ENCODE measurements at regions of chr3 and their contacts with region 1.

Region 1: GRCh38 chr3:9731206-9732079 is at the start of gene BRPF1:
- DNase-seq: peak; percentile 99
- ATAC-seq: peak; percentile 94
- H3K4me3 Mint-ChIP-seq: peak within 1 kb of the TSS; percentile 91
- H3K27ac Mint-ChIP-seq: peak within 1 kb of the TSS; percentile 96
- H3K4me1 Mint-ChIP-seq: peaks cover 18% of the 10 kb centered on the region
- H3K27me3 Mint-ChIP-seq: no peaks in the 10 kb centered on the region
- CTCF ChIP-seq: no peak
- total RNA-seq, gene BRPF1: 20.4 to 22.8 TPM (median 21.4 TPM) in 3 replicates

Region 2: GRCh38 chr3:9352917-9353752 is 378.3 kb before region 1 on chr3:
- CTCF ChIA-PET with region 1: interaction called, 12 read pairs
- POLR2A ChIA-PET with region 1: no interaction called
- DNase-seq: peak; percentile 72
- ATAC-seq: peak; percentile 74
- H3K4me3 Mint-ChIP-seq: peak overlapping the region; percentile 45; the same call in 1 of the 2 replicates
- H3K27ac Mint-ChIP-seq: peak overlapping the region; percentile 97
- H3K4me1 Mint-ChIP-seq: peaks cover 46% of the 10 kb centered on the region
- H3K27me3 Mint-ChIP-seq: no peaks in the 10 kb centered on the region
- CTCF ChIP-seq: peak; percentile 68

Region 3: DNA sequence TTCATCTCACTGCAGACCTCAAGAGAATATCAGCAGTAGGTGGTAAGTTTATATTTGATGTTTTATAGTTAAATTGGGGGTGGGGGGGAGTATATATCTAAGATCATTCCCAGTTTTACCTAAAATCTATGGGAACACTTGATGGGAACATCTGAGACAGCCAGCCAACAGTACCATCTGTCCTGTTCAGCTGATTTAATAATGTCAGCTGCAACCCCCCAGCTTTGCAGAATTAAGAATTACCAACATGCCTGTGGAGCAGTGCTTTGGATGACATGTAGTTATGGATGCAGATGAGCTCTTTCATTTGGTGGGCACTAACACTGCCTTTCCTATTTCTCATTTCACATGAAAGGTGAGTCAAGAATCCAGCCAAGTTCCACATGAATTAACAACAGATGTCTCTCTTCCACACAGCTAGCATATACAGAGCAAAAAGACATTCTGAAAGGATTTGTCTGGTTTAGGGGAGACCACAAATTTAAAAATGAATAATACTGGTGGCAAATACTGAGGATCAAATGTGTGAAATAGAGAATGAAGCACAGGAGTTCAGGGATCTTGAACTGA is 257.9 kb before region 1 on chr3:
- CTCF ChIA-PET with region 1: no interaction called
- POLR2A ChIA-PET with region 1: no interaction called
- DNase-seq: no peak
- ATAC-seq: no peak
- H3K4me3 Mint-ChIP-seq: no peak overlapping the region
- H3K27ac Mint-ChIP-seq: no peak overlapping the region
- H3K4me1 Mint-ChIP-seq: no peaks in the 10 kb centered on the region
- H3K27me3 Mint-ChIP-seq: no peaks in the 10 kb centered on the region
- CTCF ChIP-seq: no peak

Region 4: GRCh38 chr3:9552252-9552999 is 179.0 kb before region 1 on chr3:
- CTCF ChIA-PET with region 1: interaction called, 15 read pairs
- POLR2A ChIA-PET with region 1: no interaction called
- DNase-seq: peak; percentile 92
- ATAC-seq: peak; percentile 72
- H3K4me3 Mint-ChIP-seq: peak overlapping the region; percentile 95
- H3K27ac Mint-ChIP-seq: no peak overlapping the region
- H3K4me1 Mint-ChIP-seq: peaks cover 26% of the 10 kb centered on the region
- H3K27me3 Mint-ChIP-seq: peaks cover 31% of the 10 kb centered on the region
- CTCF ChIP-seq: no peak

Region 5: DNA sequence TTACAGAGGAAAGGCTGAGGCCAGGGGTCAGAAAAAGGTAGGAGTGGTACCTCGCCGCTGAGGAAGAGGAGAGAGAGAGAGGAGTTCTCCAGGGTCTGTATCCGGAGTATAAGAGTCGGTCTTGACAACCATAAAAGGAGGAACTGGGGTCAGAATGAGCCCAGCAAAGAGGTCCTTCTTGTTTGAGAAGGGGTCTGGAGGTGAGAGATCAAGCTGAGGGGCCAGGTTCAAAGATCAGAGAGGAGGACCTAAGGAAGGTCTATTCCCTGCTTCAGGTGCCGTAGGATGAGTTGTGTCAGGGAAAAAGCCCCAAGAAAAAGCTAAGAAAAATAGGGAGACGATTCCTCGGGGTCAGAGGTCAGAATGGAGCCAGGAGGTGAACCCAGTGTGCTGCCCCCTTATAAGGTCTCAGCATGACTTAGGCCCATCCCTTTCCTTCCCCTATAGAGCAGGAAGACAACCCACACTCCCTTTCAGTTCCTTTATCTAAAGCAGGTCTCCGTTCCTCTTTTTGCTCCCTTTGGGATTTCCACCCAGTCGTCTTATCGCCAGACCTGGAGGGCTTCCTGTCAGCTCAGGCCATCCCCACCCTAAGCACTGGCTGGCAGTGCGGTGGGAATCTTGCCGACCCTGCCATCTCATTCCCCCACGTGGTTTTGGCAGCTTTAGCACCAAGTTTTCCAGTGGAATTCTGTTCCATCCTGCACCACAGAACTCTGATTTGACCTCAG is 81.5 kb before region 1 on chr3:
- CTCF ChIA-PET with region 1: interaction called, 15 read pairs
- POLR2A ChIA-PET with region 1: no interaction called
- DNase-seq: no peak
- ATAC-seq: no peak
- H3K4me3 Mint-ChIP-seq: peak overlapping the region; percentile 97
- H3K27ac Mint-ChIP-seq: peak overlapping the region; percentile 80
- H3K4me1 Mint-ChIP-seq: peaks cover 14% of the 10 kb centered on the region
- H3K27me3 Mint-ChIP-seq: no peaks in the 10 kb centered on the region
- CTCF ChIP-seq: no peak

Region 6: DNA sequence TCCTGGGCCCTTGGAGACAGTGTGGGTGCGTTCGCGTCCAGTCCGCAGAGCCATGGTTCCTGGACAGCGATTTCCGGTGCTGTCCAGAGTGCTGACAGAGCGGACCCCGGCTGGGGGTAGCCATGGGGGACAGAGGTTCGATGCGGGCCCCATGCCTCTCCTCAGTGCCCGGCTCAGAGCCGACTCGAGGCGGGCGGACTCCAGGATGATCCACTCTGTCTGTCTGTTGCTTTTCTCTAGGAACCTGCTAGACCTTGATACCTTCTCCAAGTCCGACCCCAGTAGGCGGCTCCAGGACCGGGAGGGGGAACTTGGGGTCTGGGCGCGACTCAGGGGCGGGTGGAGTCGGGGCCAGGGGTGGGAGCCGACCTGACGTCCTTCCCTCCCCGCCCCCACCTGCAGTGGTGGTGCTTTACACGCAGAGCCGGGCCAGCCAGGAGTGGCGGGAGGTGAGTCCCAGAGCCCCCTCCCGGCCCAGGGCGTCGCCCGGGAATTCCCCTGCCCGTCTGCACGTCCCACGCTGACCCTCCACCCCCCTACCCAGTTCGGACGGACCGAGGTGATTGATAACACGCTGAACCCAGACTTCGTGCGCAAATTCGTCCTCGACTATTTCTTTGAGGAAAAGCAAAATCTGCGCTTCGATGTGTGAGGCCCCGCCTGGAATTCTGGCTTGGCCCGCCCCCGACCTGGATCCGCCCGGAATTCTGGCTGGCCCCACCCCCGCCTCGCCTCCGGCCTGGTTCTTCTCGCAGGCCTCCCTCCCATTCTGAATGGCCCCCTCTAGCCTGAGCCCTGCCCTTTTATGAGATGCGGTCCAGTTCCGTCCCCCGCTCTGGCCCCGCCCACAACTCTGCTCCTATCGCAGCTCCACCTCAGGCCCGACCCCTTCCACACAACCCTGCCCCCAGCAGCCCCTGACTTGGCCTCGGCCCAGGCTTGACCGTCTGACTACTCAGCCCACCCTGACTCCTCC is 26.8 kb before region 1 on chr3:
- CTCF ChIA-PET with region 1: interaction called, 72 read pairs
- POLR2A ChIA-PET with region 1: no interaction called
- DNase-seq: peak; percentile 97
- ATAC-seq: peak; percentile 96
- H3K4me3 Mint-ChIP-seq: peak overlapping the region; percentile 73
- H3K27ac Mint-ChIP-seq: no peak overlapping the region
- H3K4me1 Mint-ChIP-seq: no peaks in the 10 kb centered on the region
- H3K27me3 Mint-ChIP-seq: peaks cover 37% of the 10 kb centered on the region
- CTCF ChIP-seq: no peak

Region 7: GRCh38 chr3:9749645-9750555 is 18.5 kb after region 1 on chr3 and contains the start of gene OGG1:
- CTCF ChIA-PET with region 1: interaction called, 21 read pairs
- POLR2A ChIA-PET with region 1: interaction called, 14 read pairs
- DNase-seq: peak; percentile 96
- ATAC-seq: peak; percentile 96
- H3K4me3 Mint-ChIP-seq: peak within 1 kb of the TSS; percentile 98
- H3K27ac Mint-ChIP-seq: peak within 1 kb of the TSS; percentile 99
- H3K4me1 Mint-ChIP-seq: peaks cover 11% of the 10 kb centered on the region
- H3K27me3 Mint-ChIP-seq: no peaks in the 10 kb centered on the region
- CTCF ChIP-seq: no peak
- total RNA-seq, gene OGG1: 23.6 to 27.3 TPM (median 26.7 TPM) in 3 replicates

Region 8: DNA sequence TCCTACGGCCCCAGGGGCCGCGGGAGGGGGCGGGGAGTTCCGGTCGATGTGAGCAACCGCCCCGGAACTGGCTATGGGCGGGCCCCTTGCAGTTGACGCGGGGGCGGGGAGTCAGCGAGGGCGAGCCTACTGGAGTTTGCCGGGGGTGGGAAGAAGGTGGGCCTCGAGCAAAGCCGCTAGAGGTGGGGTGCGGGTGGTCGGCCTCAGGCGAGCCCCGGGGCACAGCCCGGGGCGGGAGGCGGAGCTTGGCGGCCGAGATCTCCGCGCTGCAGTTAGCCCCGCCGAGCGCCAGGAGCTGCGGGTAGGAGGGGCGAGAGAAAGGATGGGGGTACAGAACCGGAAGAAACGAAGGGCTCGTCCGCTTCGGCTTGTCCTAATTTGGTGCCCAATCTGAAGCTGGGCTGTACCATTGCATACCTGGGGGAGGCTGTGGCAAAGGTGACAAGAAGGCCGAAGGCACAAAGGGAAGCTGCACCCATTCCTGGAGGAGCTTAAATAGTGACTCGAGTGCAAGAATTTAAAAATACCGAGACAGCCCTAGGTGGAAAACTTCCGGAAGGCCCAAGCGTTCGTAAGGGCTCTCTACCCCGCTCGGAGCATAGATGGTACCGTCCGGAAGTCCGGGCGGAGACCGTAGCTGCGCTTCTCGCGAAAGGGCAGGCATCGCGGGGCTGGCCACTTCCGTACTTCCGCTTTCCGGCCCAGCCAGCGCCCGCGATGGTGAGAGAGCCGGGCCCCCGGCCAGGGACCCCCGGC is 61.1 kb after region 1 on chr3 and contains the starts of genes ARPC4 and TADA3:
- CTCF ChIA-PET with region 1: interaction called, 11 read pairs
- POLR2A ChIA-PET with region 1: interaction called, 3 read pairs
- DNase-seq: peak; percentile 89
- ATAC-seq: peak; percentile 90
- H3K4me3 Mint-ChIP-seq: peak within 1 kb of the TSS; percentile 94
- H3K27ac Mint-ChIP-seq: peak within 1 kb of the TSS; percentile 100
- H3K4me1 Mint-ChIP-seq: peaks cover 18% of the 10 kb centered on the region
- H3K27me3 Mint-ChIP-seq: no peaks in the 10 kb centered on the region; the same call in 1 of the 2 replicates
- CTCF ChIP-seq: no peak
- total RNA-seq, gene ARPC4: 127 to 143 TPM (median 133 TPM) in 3 replicates
- total RNA-seq, gene TADA3: 49.0 to 57.9 TPM (median 55.9 TPM) in 3 replicates

Measured in WTC11 (cell line).